MCF 10A (cell line): ENCODE measurements at regions of chr21 and their contacts with region 1.

Region 1: DNA sequence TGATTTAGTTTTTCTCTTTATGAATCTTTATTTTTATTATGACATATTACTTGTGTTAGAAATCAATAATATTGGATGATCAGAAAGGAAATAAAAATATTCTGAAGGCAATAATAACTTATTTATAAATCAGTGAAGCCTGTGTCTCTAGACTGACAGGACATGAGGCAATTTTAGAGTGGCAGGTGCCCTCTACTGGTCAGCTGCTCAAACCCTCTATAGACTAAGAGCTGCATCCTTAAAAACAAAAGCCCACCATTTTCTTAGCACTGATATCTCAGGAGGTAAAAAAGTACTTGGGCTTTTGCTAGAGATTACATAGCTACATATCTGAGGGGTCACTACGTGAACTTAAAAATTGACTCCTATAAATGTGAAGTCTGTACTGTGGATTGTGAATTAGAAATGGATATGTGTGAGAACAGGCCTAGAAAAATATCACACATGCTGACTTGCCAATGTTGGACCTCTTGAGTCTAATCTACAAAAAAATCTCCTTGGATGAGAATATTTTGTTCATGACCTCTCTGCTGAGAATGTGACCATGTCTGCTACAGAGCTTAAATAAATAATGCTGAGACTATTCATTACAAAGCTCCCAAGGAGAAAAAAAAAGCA is 597.9 kb upstream of the ADAMTS5 start:
- DNase-seq: peak; percentile 51
- H3K4me3 Mint-ChIP-seq: no peak overlapping the region
- H3K27ac Mint-ChIP-seq: no peak overlapping the region
- H3K4me1 Mint-ChIP-seq: peaks cover 12% of the 10 kb centered on the region
- H3K27me3 Mint-ChIP-seq: no peaks in the 10 kb centered on the region
- CTCF ChIP-seq: peak; percentile 71

Region 2: GRCh38 chr21:26865857-26866256 is 698.9 kb before region 1 on chr21:
- CTCF ChIA-PET with region 1: interaction called, 10 read pairs
- POLR2A ChIA-PET with region 1: no interaction called
- intact Hi-C with region 1: no loop called
- DNase-seq: no peak
- H3K4me3 Mint-ChIP-seq: no peak overlapping the region
- H3K27ac Mint-ChIP-seq: no peak overlapping the region
- H3K4me1 Mint-ChIP-seq: peaks cover 11% of the 10 kb centered on the region
- H3K27me3 Mint-ChIP-seq: no peaks in the 10 kb centered on the region
- CTCF ChIP-seq: no peak

Region 3: GRCh38 chr21:26887251-26887650 is 677.5 kb before region 1 on chr21:
- CTCF ChIA-PET with region 1: interaction called, 26 read pairs
- POLR2A ChIA-PET with region 1: no interaction called
- intact Hi-C with region 1: no loop called
- DNase-seq: no peak
- H3K4me3 Mint-ChIP-seq: no peak overlapping the region
- H3K27ac Mint-ChIP-seq: no peak overlapping the region
- H3K4me1 Mint-ChIP-seq: no peaks in the 10 kb centered on the region
- H3K27me3 Mint-ChIP-seq: no peaks in the 10 kb centered on the region
- CTCF ChIP-seq: no peak

Region 4: GRCh38 chr21:27545754-27546349 is 18.9 kb before region 1 on chr21:
- CTCF ChIA-PET with region 1: interaction called, 13 read pairs
- POLR2A ChIA-PET with region 1: no interaction called
- intact Hi-C with region 1: no loop called
- DNase-seq: no peak
- H3K4me3 Mint-ChIP-seq: no peak overlapping the region
- H3K27ac Mint-ChIP-seq: no peak overlapping the region
- H3K4me1 Mint-ChIP-seq: peaks cover 6% of the 10 kb centered on the region
- H3K27me3 Mint-ChIP-seq: no peaks in the 10 kb centered on the region
- CTCF ChIP-seq: no peak

Region 5: DNA sequence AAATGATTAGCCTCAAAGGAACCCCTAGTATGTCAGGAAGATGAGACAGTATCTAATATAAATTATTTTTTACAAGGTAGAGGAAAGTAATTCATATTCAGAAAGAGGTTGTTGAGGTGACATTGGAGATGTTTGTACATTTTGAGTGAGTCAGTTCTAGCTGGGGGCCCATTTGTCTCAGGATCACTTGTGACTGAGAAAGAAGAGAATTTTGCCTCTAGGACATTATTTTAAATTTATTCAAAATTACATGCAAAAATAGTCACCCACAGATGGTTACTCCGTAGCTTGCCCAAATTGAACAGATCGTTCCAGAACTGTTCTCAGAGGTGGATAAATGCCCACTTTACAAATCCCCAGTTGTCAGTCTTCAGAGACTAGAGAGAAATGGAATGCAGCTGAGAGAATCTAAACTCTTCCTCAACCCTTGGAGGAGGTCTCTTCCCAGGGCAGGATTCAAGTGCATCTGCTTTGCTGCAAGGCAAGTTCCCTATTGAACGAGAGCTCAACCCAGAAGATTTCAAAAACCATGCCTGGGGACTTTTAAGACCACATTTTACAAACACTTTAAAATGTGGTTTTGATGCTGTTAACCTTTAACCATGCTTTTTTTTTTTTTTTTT is 389.9 kb after region 1 on chr21:
- CTCF ChIA-PET with region 1: no interaction called
- POLR2A ChIA-PET with region 1: no interaction called
- intact Hi-C with region 1: no loop called
- DNase-seq: no peak
- H3K4me3 Mint-ChIP-seq: no peak overlapping the region
- H3K27ac Mint-ChIP-seq: no peak overlapping the region
- H3K4me1 Mint-ChIP-seq: no peaks in the 10 kb centered on the region
- H3K27me3 Mint-ChIP-seq: no peaks in the 10 kb centered on the region
- CTCF ChIP-seq: no peak